ENCODE measurements at regions of chr15 and their contacts with region 1.

Region 1: DNA sequence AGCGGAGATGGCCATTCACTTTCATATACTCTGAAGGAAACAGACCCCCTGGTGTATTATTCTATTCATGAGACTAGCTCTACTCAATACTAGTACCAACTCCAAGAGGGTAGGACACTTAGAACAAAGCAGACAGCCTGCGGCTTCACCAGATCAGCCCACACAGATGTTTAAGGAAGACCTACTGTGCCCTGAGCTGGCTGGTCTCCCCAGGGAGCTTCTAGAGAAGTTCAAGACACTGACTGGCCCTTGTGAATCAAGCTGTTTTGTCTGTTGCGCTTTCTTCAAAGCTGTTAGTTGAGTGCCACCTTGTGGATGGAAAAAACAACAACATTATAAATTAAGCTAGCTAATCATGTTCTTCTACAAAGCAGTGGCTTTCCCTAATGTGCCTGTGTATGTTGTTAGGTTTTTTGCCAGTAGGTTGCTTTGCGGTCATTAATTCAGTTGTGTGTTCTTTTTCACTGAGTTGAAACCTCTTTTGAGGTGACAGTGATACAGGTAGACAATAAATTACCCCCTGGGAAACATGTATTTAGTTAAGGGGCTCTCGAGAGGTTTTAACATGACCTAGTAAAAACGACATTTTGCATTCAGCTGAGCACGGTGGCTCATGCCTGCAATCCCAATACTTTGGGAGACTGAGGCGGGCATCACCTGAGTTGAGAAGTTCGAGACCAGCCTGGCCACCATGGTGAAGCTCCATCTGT is 64.2 kb upstream of the MYZAP start:
- DNase-seq: peak; percentile 39 to 72 (median 42)
- ATAC-seq: peak; percentile 79
- H3K4me3 ChIP-seq: no peak overlapping the region
- H3K27ac ChIP-seq: no peak overlapping the region
- H3K4me1 ChIP-seq: no peaks in the 10 kb centered on the region
- H3K27me3 ChIP-seq: peaks cover 18 to 31% of the 10 kb centered on the region in 2 experiments; a peak in 3 of 5 replicates
- CTCF ChIP-seq: peak; percentile 43 to 84 (median 57); a peak in 5 of 6 replicates
- EP300 ChIP-seq: no peak
- POLR2A ChIP-seq: no peak
- RAD21 ChIP-seq: peak; percentile 78 to 90

Region 2: DNA sequence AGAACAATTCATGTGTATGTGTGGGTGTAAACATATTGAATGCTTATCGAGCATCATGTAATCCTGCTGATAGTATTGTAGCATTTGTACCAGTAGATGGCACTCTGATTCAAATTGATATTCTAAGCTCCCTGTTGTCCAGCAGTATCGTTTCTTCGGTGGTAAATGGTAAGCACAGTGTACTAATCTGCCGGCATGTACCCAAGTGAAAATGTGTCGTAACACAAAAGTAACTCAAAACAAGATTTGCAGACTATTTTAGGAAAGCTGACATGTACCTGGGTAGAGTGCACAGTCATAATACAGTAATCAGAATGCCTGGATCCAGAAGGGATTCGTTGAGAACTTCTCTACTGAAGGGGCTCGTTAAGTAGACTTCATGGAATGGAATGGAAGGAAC is 1030.9 kb before region 1 on chr15:
- CTCF ChIA-PET with region 1: interaction called, 10 read pairs
- POLR2A ChIA-PET with region 1: no interaction called
- in situ Hi-C with region 1: loop called (anchors 10 kb)
- intact Hi-C with region 1: loop called (anchors 2 kb)
- DNase-seq: peak; percentile 46 to 69 (median 60)
- ATAC-seq: peak; percentile 96
- H3K4me3 ChIP-seq: no peak overlapping the region
- H3K27ac ChIP-seq: no peak overlapping the region
- H3K4me1 ChIP-seq: no peaks in the 10 kb centered on the region; a peak in 1 of 5 replicates
- H3K27me3 ChIP-seq: no peaks in the 10 kb centered on the region
- CTCF ChIP-seq: peak; percentile 51 to 80 (median 59); a peak in 5 of 6 replicates
- EP300 ChIP-seq: no peak
- POLR2A ChIP-seq: no peak
- RAD21 ChIP-seq: peak; percentile 82 to 94

Region 3: DNA sequence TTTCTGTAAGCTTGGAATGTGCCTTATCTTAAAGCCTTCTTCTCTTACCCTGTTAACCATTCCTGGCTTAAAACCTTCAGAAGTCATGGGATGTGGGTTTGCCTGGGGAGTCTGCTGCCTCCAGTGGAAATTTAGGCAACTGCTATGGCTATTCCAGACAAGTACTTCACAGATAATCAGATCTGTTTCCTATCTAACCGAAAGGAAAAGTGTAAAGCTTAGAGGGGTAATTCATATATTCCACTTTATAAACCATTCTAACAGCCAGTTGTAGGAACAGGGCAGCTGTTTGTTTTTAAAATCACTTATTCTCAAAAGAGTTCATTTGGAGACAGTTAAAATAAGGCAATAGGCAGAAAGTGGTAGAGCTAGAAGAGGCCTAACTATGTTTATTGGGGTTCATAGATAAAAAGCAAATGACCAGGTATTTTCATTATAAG is 389.2 kb before region 1 on chr15:
- CTCF ChIA-PET with region 1: no interaction called
- POLR2A ChIA-PET with region 1: no interaction called
- in situ Hi-C with region 1: loop called (anchors 5 kb)
- intact Hi-C with region 1: no loop called
- DNase-seq: peak; percentile 44 to 65 (median 54)
- ATAC-seq: peak; percentile 96
- H3K4me3 ChIP-seq: no peak overlapping the region
- H3K27ac ChIP-seq: no peak overlapping the region
- H3K4me1 ChIP-seq: peaks cover 0 to 5% of the 10 kb centered on the region in 2 experiments; a peak in 2 of 5 replicates
- H3K27me3 ChIP-seq: no peaks in the 10 kb centered on the region
- CTCF ChIP-seq: peak; percentile 58 to 77 (median 69)
- EP300 ChIP-seq: no peak
- POLR2A ChIP-seq: no peak
- RAD21 ChIP-seq: peak; percentile 34 to 57; a peak in 2 of 4 replicates

Region 4: GRCh38 chr15:57146506-57147201 is 380.9 kb before region 1 on chr15:
- CTCF ChIA-PET with region 1: interaction called, 4 read pairs
- POLR2A ChIA-PET with region 1: no interaction called
- in situ Hi-C with region 1: no loop called
- intact Hi-C with region 1: loop called (anchors 1 kb)
- DNase-seq: peak; percentile 10 to 53 (median 16)
- ATAC-seq: 0 out of 3 replicates have a peak, but pooled peaks have one; percentile 45
- H3K4me3 ChIP-seq: no peak overlapping the region
- H3K27ac ChIP-seq: no peak overlapping the region
- H3K4me1 ChIP-seq: peaks cover 4 to 16% of the 10 kb centered on the region in 2 experiments; a peak in 4 of 5 replicates
- H3K27me3 ChIP-seq: no peaks in the 10 kb centered on the region
- CTCF ChIP-seq: peak in 2 of 3 experiments; percentile 46 to 78; a peak in 4 of 6 replicates
- EP300 ChIP-seq: no peak
- POLR2A ChIP-seq: no peak
- RAD21 ChIP-seq: peak; percentile 48 to 74

Region 5: DNA sequence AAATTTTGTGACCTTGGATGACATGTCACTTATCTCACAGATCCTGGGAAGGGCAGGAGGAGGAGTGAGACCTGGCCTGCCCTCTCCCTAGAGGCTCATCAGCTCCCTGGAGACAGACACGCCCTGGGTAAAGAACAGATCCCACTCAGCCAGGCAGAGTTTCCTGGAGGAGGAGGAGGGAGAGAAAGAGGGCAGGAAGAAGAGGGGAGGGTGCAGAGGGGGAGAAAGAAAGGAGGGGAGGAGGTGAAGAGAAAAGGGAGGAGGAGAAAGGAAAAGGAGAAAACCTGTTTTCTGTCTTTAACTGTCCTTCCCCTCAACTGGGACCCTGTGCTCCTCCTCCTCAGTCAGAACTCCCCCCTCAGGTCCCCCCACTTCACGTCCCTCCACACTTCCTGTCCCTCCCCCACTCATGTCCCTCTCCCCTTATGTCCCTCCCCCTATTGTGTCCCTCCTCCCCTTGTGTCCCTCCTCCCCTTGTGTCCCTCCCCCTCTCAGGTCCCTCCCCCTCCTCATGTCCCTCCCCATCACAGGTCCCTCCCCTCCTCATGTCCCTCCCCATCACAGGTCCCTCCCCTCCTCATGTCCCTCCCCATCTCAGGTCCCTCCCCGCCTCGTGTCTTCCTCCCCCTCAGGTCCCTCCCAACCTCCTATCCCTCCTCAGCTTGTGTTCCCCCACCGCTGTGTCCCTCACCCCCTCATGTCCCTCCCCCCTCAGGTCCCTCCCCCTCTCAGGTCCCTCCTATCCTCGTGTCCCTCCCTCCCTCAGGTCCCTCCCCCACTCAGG is 203.5 kb before region 1 on chr15:
- CTCF ChIA-PET with region 1: interaction called, 11 read pairs
- POLR2A ChIA-PET with region 1: interaction called, 3 read pairs
- in situ Hi-C with region 1: no loop called
- intact Hi-C with region 1: no loop called
- DNase-seq: peak; percentile 97 to 98 (median 98)
- ATAC-seq: peak; percentile 84
- H3K4me3 ChIP-seq: peak overlapping the region; percentile 28
- H3K27ac ChIP-seq: peak overlapping the region; percentile 99
- H3K4me1 ChIP-seq: peaks cover 56 to 68% of the 10 kb centered on the region in 2 experiments
- H3K27me3 ChIP-seq: no peaks in the 10 kb centered on the region
- CTCF ChIP-seq: no peak
- EP300 ChIP-seq: peak; percentile 46
- POLR2A ChIP-seq: peak; percentile 82
- RAD21 ChIP-seq: no peak

Region 6: DNA sequence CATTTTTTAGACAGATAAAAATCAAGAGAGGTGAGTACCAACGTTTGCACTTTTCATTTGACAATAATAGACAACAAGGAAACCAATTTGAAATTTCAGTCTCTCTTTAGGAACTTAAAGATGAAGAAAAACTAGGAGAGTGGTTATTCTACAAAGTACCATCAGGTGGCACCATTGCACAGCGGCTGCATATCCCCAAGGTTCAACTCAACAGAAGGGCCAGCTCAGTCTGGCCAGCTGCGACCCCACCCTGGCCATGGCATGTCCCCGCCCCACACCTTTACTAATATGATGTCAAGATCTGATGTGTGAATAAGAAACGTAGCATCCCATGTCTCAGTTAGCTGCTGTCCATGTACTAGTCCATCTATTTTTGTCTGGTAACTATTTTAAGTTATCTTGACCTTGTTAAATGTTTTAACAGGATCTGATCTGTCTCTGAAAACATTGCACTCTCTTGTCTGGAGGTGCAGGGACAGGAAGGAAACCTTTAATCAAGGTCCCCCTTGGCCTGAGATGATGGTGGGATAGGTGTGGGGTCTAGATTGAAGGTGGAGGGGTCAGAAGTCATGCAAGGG is 186.8 kb before region 1 on chr15:
- CTCF ChIA-PET with region 1: interaction called, 29 read pairs
- POLR2A ChIA-PET with region 1: interaction called, 5 read pairs
- in situ Hi-C with region 1: loop called (anchors 5 kb)
- intact Hi-C with region 1: loop called (anchors 1 kb)
- DNase-seq: peak; percentile 58 to 77 (median 72)
- ATAC-seq: peak; percentile 82
- H3K4me3 ChIP-seq: no peak overlapping the region
- H3K27ac ChIP-seq: no peak overlapping the region
- H3K4me1 ChIP-seq: peaks cover 5 to 10% of the 10 kb centered on the region in 2 experiments
- H3K27me3 ChIP-seq: no peaks in the 10 kb centered on the region
- CTCF ChIP-seq: peak; percentile 69 to 96 (median 86)
- EP300 ChIP-seq: no peak
- POLR2A ChIP-seq: no peak
- RAD21 ChIP-seq: peak; percentile 88 to 94

Region 7: GRCh38 chr15:57505949-57506391 is 21.6 kb before region 1 on chr15:
- CTCF ChIA-PET with region 1: no interaction called
- POLR2A ChIA-PET with region 1: no interaction called
- in situ Hi-C with region 1: no loop called
- intact Hi-C with region 1: no loop called
- DNase-seq: no peak
- ATAC-seq: no peak
- H3K4me3 ChIP-seq: no peak overlapping the region
- H3K27ac ChIP-seq: no peak overlapping the region
- H3K4me1 ChIP-seq: no peaks in the 10 kb centered on the region
- H3K27me3 ChIP-seq: peaks cover 19 to 45% of the 10 kb centered on the region in 2 experiments; a peak in 4 of 5 replicates
- CTCF ChIP-seq: no peak
- EP300 ChIP-seq: no peak
- POLR2A ChIP-seq: no peak
- RAD21 ChIP-seq: no peak

Measured in K562 (cell line).